ENCODE measurements at regions of chr17 and their contacts with region 1.

Region 1: GRCh38 chr17:59415397-59415796 is 83.9 kb downstream of the YPEL2 start:
- DNase-seq: no peak
- ATAC-seq: no peak
- H3K4me3 ChIP-seq: no peak overlapping the region
- H3K27ac ChIP-seq: no peak overlapping the region
- H3K4me1 ChIP-seq: peaks cover 2% of the 10 kb centered on the region
- H3K27me3 ChIP-seq: no peaks in the 10 kb centered on the region

Region 2: GRCh38 chr17:59277031-59277430 is 138.4 kb before region 1 on chr17:
- intact Hi-C with region 1: no loop called
- DNase-seq: no peak
- ATAC-seq: no peak
- H3K4me3 ChIP-seq: no peak overlapping the region
- H3K27ac ChIP-seq: no peak overlapping the region
- H3K4me1 ChIP-seq: no peaks in the 10 kb centered on the region
- H3K27me3 ChIP-seq: no peaks in the 10 kb centered on the region

Region 3: DNA sequence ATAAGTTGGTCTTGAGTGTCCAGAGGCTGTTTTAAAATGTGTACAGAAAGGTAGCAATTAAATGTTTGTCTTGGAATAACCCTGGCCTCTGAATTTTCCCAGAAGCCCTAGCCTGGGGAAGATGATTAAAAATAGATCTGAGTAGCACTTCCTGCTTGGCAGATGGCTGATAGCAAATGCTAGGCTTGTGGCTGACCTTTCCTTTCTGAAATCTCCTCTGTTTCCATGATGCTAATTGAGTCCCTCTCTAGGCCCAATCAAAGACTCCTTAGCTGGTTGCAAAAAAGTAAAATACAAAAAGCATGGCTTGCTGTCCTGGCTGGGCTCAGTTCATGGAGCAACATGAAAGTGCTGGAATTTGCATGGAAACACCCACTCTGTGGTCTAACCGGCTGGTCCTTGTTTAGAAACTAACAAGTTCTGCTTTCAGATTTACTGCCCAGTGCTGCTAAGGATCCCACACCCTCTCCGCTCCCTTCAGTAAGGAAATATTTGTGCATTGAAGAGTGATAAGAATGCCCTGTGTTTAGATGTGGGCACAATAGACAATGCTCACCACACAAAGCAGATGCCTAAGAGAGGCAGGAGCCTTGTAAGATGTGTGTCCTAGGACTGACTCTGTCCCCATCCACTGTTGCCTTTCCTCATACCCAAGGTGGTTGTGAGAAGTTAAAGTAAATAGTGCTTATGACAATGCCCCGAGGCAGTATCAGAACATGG is 43.1 kb before region 1 on chr17:
- intact Hi-C with region 1: loop called in 1 of 4 experiments (anchors 5 kb)
- DNase-seq: peak in 1 of 3 donors; percentile 51
- ATAC-seq: peak; percentile 79 to 92
- H3K4me3 ChIP-seq: no peak overlapping the region
- H3K27ac ChIP-seq: peak overlapping the region; percentile 97
- H3K4me1 ChIP-seq: peaks cover 56% of the 10 kb centered on the region
- H3K27me3 ChIP-seq: no peaks in the 10 kb centered on the region